A549 (cell line): ENCODE measurements at regions of chr3 and their contacts with region 1.

Region 1: GRCh38 chr3:115147329-115148141 is 447 bp upstream of the ZBTB20 start:
- DNase-seq: peak; percentile 86 to 100
- ATAC-seq: peak; percentile 83 to 92
- H3K4me3 ChIP-seq: peak overlapping the region; percentile 78
- H3K27ac ChIP-seq: peak overlapping the region; percentile 87 to 97
- H3K4me1 ChIP-seq: peaks cover 14% of the 10 kb centered on the region
- CTCF ChIP-seq: no peak
- EP300 ChIP-seq: no peak
- POLR2A ChIP-seq: peak; percentile 73
- RAD21 ChIP-seq: 0 out of 5 replicates have a peak, but pooled peaks of 1 of the 2 experiments have one; percentile 15

Region 2: GRCh38 chr3:115134648-115135347 is 12.7 kb before region 1 on chr3:
- CTCF ChIA-PET with region 1: interaction called, 13 read pairs
- POLR2A ChIA-PET with region 1: interaction called, 6 read pairs
- DNase-seq: no peak
- ATAC-seq: no peak
- H3K4me3 ChIP-seq: no peak overlapping the region
- H3K27ac ChIP-seq: no peak overlapping the region
- H3K4me1 ChIP-seq: no peaks in the 10 kb centered on the region
- CTCF ChIP-seq: no peak
- EP300 ChIP-seq: no peak
- POLR2A ChIP-seq: no peak
- RAD21 ChIP-seq: no peak

Region 3: DNA sequence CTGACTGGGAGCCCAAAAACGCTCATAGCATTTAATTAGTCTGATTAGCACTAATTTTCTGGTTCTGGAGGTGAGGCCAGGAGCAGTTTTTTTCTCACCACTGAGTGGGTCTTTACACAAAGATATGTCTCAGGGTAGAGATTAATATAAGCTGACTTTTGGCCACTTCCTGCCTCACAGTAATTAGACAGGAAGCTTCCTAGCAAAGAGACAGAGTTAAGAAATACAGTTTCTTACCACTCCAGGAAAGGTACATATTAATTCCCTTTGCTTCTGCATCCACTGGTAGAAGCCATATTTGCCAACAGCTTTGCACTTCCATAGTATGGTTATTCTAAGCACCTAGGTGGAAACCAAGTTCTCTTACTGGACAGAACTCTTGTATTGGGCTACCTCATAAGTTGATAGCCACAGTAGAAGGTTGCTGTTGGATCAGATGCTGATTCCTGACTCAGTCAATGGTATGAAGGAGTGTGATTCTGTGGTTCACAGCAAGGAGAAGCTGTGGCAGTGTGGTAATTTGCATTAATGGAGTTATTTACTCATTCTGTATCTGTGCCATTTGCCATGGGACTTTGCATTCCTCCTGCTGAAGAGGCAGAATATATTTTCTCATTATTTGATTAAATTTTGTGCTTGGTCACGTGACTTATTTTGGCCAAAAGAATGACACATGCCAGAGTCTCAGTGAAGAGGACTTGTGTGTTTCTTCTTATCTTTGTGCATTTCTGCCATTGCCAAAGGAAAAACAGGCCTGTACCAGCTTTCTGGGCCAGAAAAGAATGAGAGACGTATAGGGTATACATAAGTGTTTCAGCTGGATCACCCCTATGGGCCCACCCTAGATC is 17.1 kb after region 1 on chr3:
- CTCF ChIA-PET with region 1: interaction called, 3 read pairs
- POLR2A ChIA-PET with region 1: interaction called, 10 read pairs
- DNase-seq: no peak
- ATAC-seq: no peak
- H3K4me3 ChIP-seq: no peak overlapping the region
- H3K27ac ChIP-seq: no peak overlapping the region
- H3K4me1 ChIP-seq: no peaks in the 10 kb centered on the region
- CTCF ChIP-seq: no peak
- EP300 ChIP-seq: no peak
- POLR2A ChIP-seq: no peak
- RAD21 ChIP-seq: no peak